ENCODE measurements at regions of chr7 and their contacts with region 1.

Region 1: DNA sequence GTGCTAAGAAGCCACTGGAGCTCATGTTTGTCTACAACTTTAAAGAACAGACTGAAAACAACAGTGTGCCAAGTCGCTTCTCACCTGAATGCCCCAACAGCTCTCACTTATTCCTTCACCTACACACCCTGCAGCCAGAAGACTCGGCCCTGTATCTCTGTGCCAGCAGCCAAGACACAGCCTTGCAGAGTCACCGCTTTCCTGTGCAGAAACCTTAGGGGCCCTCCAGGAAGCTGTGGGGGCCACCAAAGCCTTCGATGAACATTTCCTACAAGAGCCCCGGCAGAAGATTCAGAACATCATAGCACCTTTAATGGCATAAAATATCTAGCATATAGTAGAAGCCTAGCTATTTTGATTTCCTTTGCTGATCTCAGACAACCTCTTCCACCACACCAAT is 88.0 kb upstream of the PRSS58 start:
- DNase-seq: peak; percentile 73
- ATAC-seq: peak; percentile 93
- H3K4me3 Mint-ChIP-seq: peak overlapping the region; percentile 47
- H3K27ac Mint-ChIP-seq: peak overlapping the region; percentile 79
- H3K4me1 Mint-ChIP-seq: peaks cover 27% of the 10 kb centered on the region
- H3K27me3 Mint-ChIP-seq: peaks cover 5% of the 10 kb centered on the region

Region 2: DNA sequence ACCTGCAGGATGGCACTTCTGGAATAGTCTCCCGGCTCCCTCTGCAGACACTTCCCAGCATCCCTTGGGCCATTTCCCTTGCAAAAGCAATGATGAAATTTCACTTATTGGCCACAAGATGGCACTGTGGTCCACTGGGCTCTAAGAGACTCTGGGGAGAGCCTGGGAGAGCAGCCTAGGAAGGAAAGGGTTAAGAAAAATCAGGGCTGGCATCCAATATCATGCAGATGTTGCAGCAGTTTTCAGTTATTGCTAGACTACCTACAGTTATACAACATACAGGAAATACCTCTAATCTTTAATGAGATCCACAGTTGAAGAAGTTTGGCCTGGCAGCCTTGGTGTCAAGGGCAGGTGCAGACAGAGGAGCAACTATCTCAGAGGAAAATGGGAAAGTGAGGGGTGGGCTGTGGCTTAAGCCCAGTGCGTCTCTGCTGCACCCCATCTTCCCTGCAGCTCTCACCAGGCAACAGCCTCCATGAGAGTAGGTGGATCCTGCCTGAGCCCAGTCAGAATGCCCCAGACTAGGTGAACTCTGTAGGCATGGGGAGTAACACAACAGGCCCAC is 12.2 kb after region 1 on chr7:
- CTCF ChIA-PET with region 1: interaction called, 19 read pairs
- POLR2A ChIA-PET with region 1: no interaction called
- DNase-seq: peak; percentile 51
- ATAC-seq: peak; percentile 43
- H3K4me3 Mint-ChIP-seq: no peak overlapping the region
- H3K27ac Mint-ChIP-seq: no peak overlapping the region
- H3K4me1 Mint-ChIP-seq: peaks cover 35% of the 10 kb centered on the region
- H3K27me3 Mint-ChIP-seq: peaks cover 25% of the 10 kb centered on the region

Measured in activated CD8-positive, alpha-beta T cell treated with anti-CD3 and anti-CD28 coated beads, Interleukin-2, amount 10 ng/mL, durations not matched to agents 7 days and 5 days (primary cell).